GM12878 (cell line): ENCODE measurements at regions of chr5 and their contacts with region 1.

Region 1: GRCh38 chr5:159331093-159331973 is 1.0 kb upstream of the IL12B start:
- DNase-seq: no peak
- ATAC-seq: peak; percentile 83
- H3K4me3 ChIP-seq: peak overlapping the region; percentile 54
- H3K27ac ChIP-seq: no peak overlapping the region
- H3K4me1 ChIP-seq: peaks cover 10% of the 10 kb centered on the region
- H3K27me3 ChIP-seq: 0 out of 4 replicates have a peak, but pooled peaks cover 0 to 3% of the 10 kb centered on the region in 2 experiments
- CTCF ChIP-seq: peak; percentile 63 to 93 (median 76)
- EP300 ChIP-seq: no peak
- POLR2A ChIP-seq: no peak
- RAD21 ChIP-seq: peak; percentile 56

Region 2: DNA sequence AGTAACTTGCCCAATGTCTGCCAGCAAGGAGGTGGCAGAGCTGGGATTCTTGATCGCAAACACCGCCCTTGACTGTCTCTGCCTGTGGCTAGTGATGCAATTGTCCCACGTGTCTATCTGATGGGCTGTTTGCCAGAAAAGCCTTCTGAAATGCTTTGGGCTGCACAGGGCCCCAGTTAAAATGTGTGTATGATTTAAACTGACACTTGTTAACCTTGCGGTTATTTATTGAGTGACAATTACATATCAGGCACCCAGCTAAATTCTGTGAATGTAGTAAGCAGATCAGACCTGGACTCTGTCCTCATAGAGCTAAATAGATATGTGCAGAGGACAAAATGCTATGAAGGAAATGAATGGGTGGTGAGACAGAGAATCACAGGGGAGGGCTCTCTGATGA is 10.6 kb after region 1 on chr5:
- CTCF ChIA-PET with region 1: interaction called, 15 read pairs
- POLR2A ChIA-PET with region 1: no interaction called
- RAD21 ChIA-PET with region 1: interaction called, 4 read pairs
- SMC1A ChIA-PET with region 1: interaction called, 20 read pairs
- in situ Hi-C with region 1: no loop called
- intact Hi-C with region 1: no loop called
- DNase-seq: no peak
- ATAC-seq: no peak
- H3K4me3 ChIP-seq: no peak overlapping the region
- H3K27ac ChIP-seq: no peak overlapping the region
- H3K4me1 ChIP-seq: no peaks in the 10 kb centered on the region
- H3K27me3 ChIP-seq: no peaks in the 10 kb centered on the region
- CTCF ChIP-seq: no peak
- EP300 ChIP-seq: no peak
- POLR2A ChIP-seq: no peak
- RAD21 ChIP-seq: no peak

Region 3: DNA sequence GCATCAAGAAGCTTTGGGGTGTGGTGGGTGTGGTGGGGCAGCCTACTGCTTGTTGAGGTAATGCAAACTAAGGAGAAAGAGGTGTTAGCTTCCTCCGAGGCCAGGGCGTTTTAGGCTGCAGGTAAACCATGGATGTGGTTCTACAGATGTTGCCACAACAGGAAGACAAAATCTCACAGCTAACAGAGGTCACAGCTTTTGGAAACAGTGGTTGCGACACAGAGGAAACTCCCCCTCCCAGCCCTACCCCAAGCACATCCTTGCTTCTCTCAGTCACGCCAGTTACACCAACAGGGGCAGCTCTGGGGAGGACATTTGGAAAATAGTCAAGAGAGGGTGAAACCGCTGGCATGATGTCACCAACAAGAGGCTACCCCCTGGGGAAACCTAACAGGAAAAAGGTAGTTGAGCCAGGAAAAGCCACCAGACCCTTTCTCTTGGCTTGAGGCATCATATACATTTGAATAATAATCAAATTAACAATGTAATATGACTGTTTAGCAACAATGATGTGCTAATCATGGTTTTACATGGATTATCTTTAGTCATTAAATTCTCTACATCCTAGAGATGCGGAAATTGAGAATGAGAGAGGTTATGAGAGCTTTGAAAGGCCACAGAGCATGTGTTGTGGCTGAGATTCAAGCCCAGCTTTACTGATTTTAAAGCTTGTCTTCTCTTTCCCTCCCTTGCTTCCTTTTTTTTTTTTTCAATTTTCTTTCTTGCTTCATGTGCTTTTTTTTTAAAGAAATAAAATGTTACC is 81.1 kb after region 1 on chr5:
- CTCF ChIA-PET with region 1: interaction called, 15 read pairs
- POLR2A ChIA-PET with region 1: interaction called, 7 read pairs
- RAD21 ChIA-PET with region 1: interaction called, 12 read pairs
- SMC1A ChIA-PET with region 1: interaction called, 13 read pairs
- in situ Hi-C with region 1: no loop called
- intact Hi-C with region 1: no loop called
- DNase-seq: peak; percentile 62
- ATAC-seq: peak; percentile 87
- H3K4me3 ChIP-seq: no peak overlapping the region
- H3K27ac ChIP-seq: no peak overlapping the region
- H3K4me1 ChIP-seq: peaks cover 19% of the 10 kb centered on the region
- H3K27me3 ChIP-seq: no peaks in the 10 kb centered on the region
- CTCF ChIP-seq: no peak
- EP300 ChIP-seq: peak in 1 of 2 experiments; percentile 51; a peak in 1 of 4 replicates
- POLR2A ChIP-seq: no peak
- RAD21 ChIP-seq: no peak

Region 4: DNA sequence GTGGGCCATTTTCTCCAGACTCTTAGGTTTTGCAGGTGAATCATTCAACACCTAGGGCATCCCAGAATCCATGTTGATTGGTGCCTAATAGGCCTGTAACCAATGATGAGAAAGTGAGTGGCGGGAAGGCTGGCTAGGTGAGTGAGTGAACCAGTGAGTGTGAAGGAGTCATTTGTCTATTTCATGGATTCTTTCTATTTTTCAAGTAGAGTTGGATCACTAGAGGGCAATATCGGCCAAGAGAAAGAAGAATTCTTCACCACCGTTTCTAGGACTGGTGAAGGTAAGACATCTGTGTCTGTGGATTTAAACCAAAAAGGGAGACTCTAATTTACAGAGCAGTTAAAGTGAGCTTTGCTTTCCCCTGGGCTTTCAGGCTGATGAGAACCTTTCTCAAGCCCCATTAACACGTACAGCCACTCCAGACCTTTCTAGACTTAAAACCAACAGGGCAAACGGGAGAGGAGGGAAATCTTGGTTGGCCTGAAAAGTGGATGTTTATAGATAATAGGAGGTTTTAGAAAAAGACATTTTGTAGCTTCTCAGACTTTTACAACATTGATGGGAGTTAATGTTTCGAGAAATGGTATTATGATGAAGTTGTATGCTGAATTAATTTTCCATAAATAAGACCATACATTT is 113.2 kb after region 1 on chr5:
- CTCF ChIA-PET with region 1: interaction called, 60 read pairs
- POLR2A ChIA-PET with region 1: no interaction called
- RAD21 ChIA-PET with region 1: interaction called, 24 read pairs
- SMC1A ChIA-PET with region 1: interaction called, 9 read pairs
- in situ Hi-C with region 1: no loop called
- intact Hi-C with region 1: loop called (anchors 5 kb)
- DNase-seq: no peak
- ATAC-seq: peak; percentile 56
- H3K4me3 ChIP-seq: no peak overlapping the region
- H3K27ac ChIP-seq: no peak overlapping the region
- H3K4me1 ChIP-seq: no peaks in the 10 kb centered on the region
- H3K27me3 ChIP-seq: no peaks in the 10 kb centered on the region
- CTCF ChIP-seq: peak; percentile 3 to 65 (median 27); a peak in 3 of 6 replicates
- EP300 ChIP-seq: no peak
- POLR2A ChIP-seq: no peak
- RAD21 ChIP-seq: peak; percentile 77

Region 5: GRCh38 chr5:159515909-159516415 is 184.6 kb after region 1 on chr5:
- CTCF ChIA-PET with region 1: interaction called, 5 read pairs
- POLR2A ChIA-PET with region 1: no interaction called
- RAD21 ChIA-PET with region 1: no interaction called
- SMC1A ChIA-PET with region 1: interaction called, 3 read pairs
- in situ Hi-C with region 1: no loop called
- intact Hi-C with region 1: loop called (anchors 5 kb)
- DNase-seq: peak; percentile 26
- ATAC-seq: peak; percentile 97
- H3K4me3 ChIP-seq: no peak overlapping the region
- H3K27ac ChIP-seq: no peak overlapping the region
- H3K4me1 ChIP-seq: peaks cover 3% of the 10 kb centered on the region; the same call in 1 of the 2 replicates
- H3K27me3 ChIP-seq: no peaks in the 10 kb centered on the region
- CTCF ChIP-seq: peak; percentile 68 to 90 (median 89)
- EP300 ChIP-seq: no peak
- POLR2A ChIP-seq: no peak
- RAD21 ChIP-seq: peak; percentile 74

Region 6: GRCh38 chr5:159987031-159987674 is 655.8 kb after region 1 on chr5:
- CTCF ChIA-PET with region 1: interaction called, 10 read pairs
- POLR2A ChIA-PET with region 1: no interaction called
- RAD21 ChIA-PET with region 1: interaction called, 8 read pairs
- SMC1A ChIA-PET with region 1: interaction called, 20 read pairs
- in situ Hi-C with region 1: loop called (anchors 10 kb)
- intact Hi-C with region 1: loop called (anchors 1 kb)
- DNase-seq: peak; percentile 8
- ATAC-seq: peak; percentile 99
- H3K4me3 ChIP-seq: peak overlapping the region; percentile 58; the same call in 1 of the 2 replicates
- H3K27ac ChIP-seq: no peak overlapping the region
- H3K4me1 ChIP-seq: no peaks in the 10 kb centered on the region
- H3K27me3 ChIP-seq: peaks cover 3 to 4% of the 10 kb centered on the region in 2 experiments
- CTCF ChIP-seq: peak; percentile 77 to 86 (median 80)
- EP300 ChIP-seq: no peak
- POLR2A ChIP-seq: no peak
- RAD21 ChIP-seq: peak; percentile 75